ENCODE measurements at regions of chr2 and their contacts with region 1.

Region 1: DNA sequence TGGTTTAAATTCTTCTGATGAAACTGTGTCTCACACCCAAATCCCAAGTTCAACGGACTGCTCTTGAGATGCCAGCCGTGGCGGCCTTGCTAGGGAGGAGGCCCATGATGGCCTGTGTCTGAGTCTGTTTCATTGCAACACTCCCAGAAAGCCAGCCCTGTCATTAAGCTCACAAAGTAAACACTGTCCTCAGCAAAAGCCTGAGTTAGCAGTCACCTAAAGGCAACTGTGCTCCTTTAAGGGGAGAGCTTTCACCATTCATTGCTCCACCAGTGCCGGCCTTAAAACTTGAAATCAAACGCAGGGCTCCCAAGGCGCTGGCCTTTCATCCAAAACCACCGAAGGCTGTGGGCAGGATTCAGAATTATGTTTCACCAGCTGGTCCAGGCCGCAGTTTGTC is 42.5 kb upstream of the PPP1CB start:
- DNase-seq: no peak
- H3K4me3 ChIP-seq: no peak overlapping the region
- H3K27ac ChIP-seq: peak overlapping the region in 35 of 59 donors; percentile 3 to 84 (median 60)
- H3K27me3 ChIP-seq: no peaks in the 10 kb centered on the region
- CTCF ChIP-seq: no peak

Region 2: GRCh38 chr2:28463893-28464292 is 245.2 kb before region 1 on chr2:
- intact Hi-C with region 1: no loop called
- DNase-seq: no peak
- H3K4me3 ChIP-seq: no peak overlapping the region
- H3K27ac ChIP-seq: no peak overlapping the region
- H3K27me3 ChIP-seq: no peaks in the 10 kb centered on the region
- CTCF ChIP-seq: no peak

Region 3: DNA sequence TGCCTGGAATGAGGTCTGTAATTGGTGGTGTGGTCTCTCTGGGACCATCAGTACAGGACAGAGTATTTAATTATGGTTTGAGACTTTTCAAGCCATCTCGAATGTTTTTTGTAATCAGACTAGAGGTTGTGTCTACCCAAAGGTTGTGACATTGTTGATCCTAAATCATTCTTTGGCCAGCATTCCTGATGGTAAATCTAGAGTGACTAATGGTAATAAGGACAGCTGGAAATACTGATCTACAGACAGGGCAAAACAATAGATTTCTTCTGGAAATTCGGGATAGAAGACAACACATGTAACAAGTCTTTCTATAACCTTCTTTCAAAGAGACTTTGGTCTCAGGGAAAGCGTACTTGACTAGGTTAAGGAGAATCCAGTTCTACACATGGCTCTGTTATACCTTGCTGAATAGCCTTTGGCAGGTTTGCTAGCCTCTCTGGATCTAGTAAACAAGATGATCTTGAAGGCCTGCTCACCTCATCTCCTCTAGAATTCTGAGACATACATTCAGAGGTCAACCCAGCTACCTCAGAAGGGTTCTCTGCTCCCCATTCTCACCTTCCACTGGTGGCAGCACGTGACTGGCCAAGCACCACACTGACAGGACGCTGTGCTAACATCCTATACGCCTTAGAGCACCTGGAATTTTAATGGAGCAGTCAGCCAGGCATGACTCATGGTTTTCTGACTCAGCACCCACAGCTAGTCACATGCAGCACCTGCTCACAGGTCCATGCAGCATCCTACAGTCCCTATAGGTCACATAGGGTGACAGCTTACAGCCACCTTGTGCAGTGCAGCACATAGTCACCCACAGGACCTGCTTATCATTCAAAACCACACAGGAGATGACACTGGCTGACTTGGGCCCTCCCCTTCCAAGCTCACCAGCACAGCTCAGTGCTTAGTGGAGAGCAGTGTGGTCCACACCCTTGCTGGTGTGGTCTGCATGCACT is 201.0 kb before region 1 on chr2:
- intact Hi-C with region 1: no loop called
- DNase-seq: no peak
- H3K4me3 ChIP-seq: no peak overlapping the region
- H3K27ac ChIP-seq: no peak overlapping the region
- H3K27me3 ChIP-seq: no peaks in the 10 kb centered on the region
- CTCF ChIP-seq: no peak

Region 4: GRCh38 chr2:28594289-28595108 is 114.6 kb before region 1 on chr2:
- intact Hi-C with region 1: loop called in 1 of 2 experiments (anchors 10 kb)
- DNase-seq: peak; percentile 72 to 88 (median 84)
- H3K4me3 ChIP-seq: peak overlapping the region in 34 of 59 donors; percentile 0 to 46 (median 20)
- H3K27ac ChIP-seq: peak overlapping the region in 32 of 59 donors; percentile 2 to 80 (median 56)
- H3K27me3 ChIP-seq: no peaks in the 10 kb centered on the region
- CTCF ChIP-seq: peak; percentile 76 to 93 (median 86)

Region 5: GRCh38 chr2:29000481-29000880 is 291.4 kb after region 1 on chr2:
- intact Hi-C with region 1: no loop called
- DNase-seq: peak in 2 of 10 donors; percentile 31 to 39
- H3K4me3 ChIP-seq: no peak overlapping the region
- H3K27ac ChIP-seq: no peak overlapping the region
- H3K27me3 ChIP-seq: no peaks in the 10 kb centered on the region
- CTCF ChIP-seq: no peak